ENCODE measurements at regions of chr10 and their contacts with region 1.

Region 1: GRCh38 chr10:94277450-94277849 is 85.3 kb downstream of the NOC3L start:
- DNase-seq: no peak
- ATAC-seq: no peak
- H3K4me3 ChIP-seq: no peak overlapping the region
- H3K4me3 Mint-ChIP-seq: no peak overlapping the region
- H3K27ac ChIP-seq: no peak overlapping the region
- H3K27ac Mint-ChIP-seq: no peak overlapping the region
- H3K4me1 ChIP-seq: no peaks in the 10 kb centered on the region
- H3K4me1 Mint-ChIP-seq: peaks cover 6 to 10% (median 7%) of the 10 kb centered on the region in 3 donors
- H3K27me3 ChIP-seq: peaks cover 2 to 11% of the 10 kb centered on the region in 2 experiments
- H3K27me3 Mint-ChIP-seq: peaks cover 10 to 19% of the 10 kb centered on the region in 2 donors

Region 2: DNA sequence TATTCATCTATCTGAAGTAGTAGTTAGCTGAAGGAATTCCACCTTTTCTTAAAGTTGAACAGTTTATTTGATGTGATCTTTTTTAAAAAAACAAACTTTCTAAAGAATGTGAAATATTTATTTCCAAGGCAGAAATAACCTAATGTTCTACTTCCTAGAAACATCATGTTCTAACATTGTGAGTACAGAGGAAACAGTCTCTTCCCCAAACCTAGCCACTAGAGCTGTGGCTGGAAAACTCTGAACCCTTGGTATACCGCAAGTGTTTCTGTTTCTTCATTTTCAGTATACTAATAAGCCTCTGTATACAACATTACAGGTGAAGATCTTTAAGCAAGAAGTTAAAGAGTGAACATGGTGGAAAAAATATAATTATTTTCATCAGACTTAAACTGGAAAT is 50.2 kb after region 1 on chr10:
- CTCF ChIA-PET with region 1: no interaction called
- POLR2A ChIA-PET with region 1: no interaction called
- DNase-seq: no peak
- ATAC-seq: no peak
- H3K4me3 ChIP-seq: no peak overlapping the region
- H3K4me3 Mint-ChIP-seq: no peak overlapping the region
- H3K27ac ChIP-seq: no peak overlapping the region
- H3K27ac Mint-ChIP-seq: no peak overlapping the region
- H3K4me1 ChIP-seq: no peaks in the 10 kb centered on the region
- H3K4me1 Mint-ChIP-seq: no peaks in the 10 kb centered on the region
- H3K27me3 ChIP-seq: no peaks in the 10 kb centered on the region
- H3K27me3 Mint-ChIP-seq: no peaks in the 10 kb centered on the region

Region 3: GRCh38 chr10:94443549-94443948 is 166.1 kb after region 1 on chr10:
- CTCF ChIA-PET with region 1: interaction called, 3 to 12 read pairs
- POLR2A ChIA-PET with region 1: no interaction called
- DNase-seq: no peak
- ATAC-seq: no peak
- H3K4me3 ChIP-seq: no peak overlapping the region
- H3K4me3 Mint-ChIP-seq: no peak overlapping the region
- H3K27ac ChIP-seq: no peak overlapping the region
- H3K27ac Mint-ChIP-seq: no peak overlapping the region
- H3K4me1 ChIP-seq: no peaks in the 10 kb centered on the region
- H3K4me1 Mint-ChIP-seq: no peaks in the 10 kb centered on the region
- H3K27me3 ChIP-seq: peaks cover 0 to 7% of the 10 kb centered on the region in 2 experiments
- H3K27me3 Mint-ChIP-seq: peaks cover 17 to 20% of the 10 kb centered on the region in 2 donors

Measured in T-cell (primary cell).